Activated T-helper 1 cell treated with anti-CD3 and anti-CD28 coated beads, Interleukin-12 subunit alpha, Interleukin-12 subunit beta, Interleukin-2, Interleukin-4 antibody, amounts not matched to agents 30 ng/mL and 10 ng/mL and 1 ng/mL, durations not matched to agents 14 hours and 24 hours and 36 hours (primary cell): ENCODE measurements at regions of chr2 and their contacts with region 1.

Region 1: GRCh38 chr2:112121682-112122254 is 16.4 kb upstream of the FBLN7 start:
- DNase-seq: peak; percentile 30
- H3K4me3 Mint-ChIP-seq: no peak overlapping the region
- H3K27ac Mint-ChIP-seq: no peak overlapping the region
- H3K4me1 Mint-ChIP-seq: no peaks in the 10 kb centered on the region
- H3K27me3 Mint-ChIP-seq: no peaks in the 10 kb centered on the region

Region 2: GRCh38 chr2:112254466-112255239 is 132.9 kb after region 1 on chr2 and contains the start of gene ZC3H8:
- intact Hi-C with region 1: loop called (anchors 1 kb)
- DNase-seq: peak; percentile 96
- H3K4me3 Mint-ChIP-seq: peak within 1 kb of the TSS; percentile 50
- H3K27ac Mint-ChIP-seq: peak within 1 kb of the TSS; percentile 91
- H3K4me1 Mint-ChIP-seq: peaks cover 27% of the 10 kb centered on the region
- H3K27me3 Mint-ChIP-seq: no peaks in the 10 kb centered on the region
- total RNA-seq, gene ZC3H8: 32.9 and 37.4 TPM in 2 replicates

Region 3: DNA sequence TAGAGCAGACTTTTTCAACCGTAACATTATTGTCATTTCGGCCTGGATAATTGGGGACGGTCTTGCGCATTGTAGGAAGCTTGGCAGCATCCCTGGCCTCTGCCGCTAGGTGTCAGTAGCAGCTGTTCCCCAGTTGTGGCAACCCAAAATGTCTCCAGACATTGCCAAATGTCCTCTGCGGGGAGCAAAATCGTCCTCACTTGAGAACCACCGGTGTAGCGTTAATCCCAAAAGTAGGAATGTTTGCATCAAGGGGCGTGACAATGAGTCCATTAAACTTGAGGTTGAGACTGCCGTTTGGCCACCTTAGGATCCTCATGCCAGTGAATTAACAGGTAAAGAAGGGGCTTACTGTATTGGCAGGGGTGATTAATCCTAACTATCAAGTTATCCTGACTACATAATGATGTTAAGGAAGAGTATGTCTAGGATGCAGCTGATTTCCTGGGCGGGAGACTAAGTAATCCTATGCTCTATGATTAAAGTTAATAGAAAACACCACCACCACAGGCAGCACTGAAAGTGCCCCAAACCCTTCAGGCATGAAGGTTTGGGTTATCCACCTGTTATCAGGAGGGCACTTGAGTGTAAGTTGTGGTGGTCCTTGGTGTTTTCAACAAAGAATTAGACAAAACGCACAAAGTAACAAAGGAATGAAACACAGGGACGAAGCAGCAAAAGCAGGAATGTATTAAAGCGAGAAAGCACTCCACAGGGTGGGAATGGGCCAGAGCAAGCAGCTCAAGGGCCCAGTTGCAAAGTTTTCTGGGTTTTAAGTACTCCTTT is 137.9 kb after region 1 on chr2:
- intact Hi-C with region 1: loop called (anchors 1 kb)
- DNase-seq: peak; percentile 74
- H3K4me3 Mint-ChIP-seq: peak overlapping the region; percentile 43
- H3K27ac Mint-ChIP-seq: no peak overlapping the region
- H3K4me1 Mint-ChIP-seq: peaks cover 26% of the 10 kb centered on the region
- H3K27me3 Mint-ChIP-seq: peaks cover 8% of the 10 kb centered on the region

Region 4: GRCh38 chr2:112481050-112481527 is 359.3 kb after region 1 on chr2:
- intact Hi-C with region 1: loop called (anchors 5 kb)
- DNase-seq: peak; percentile 79
- H3K4me3 Mint-ChIP-seq: peak overlapping the region; percentile 87
- H3K27ac Mint-ChIP-seq: peak overlapping the region; percentile 96
- H3K4me1 Mint-ChIP-seq: peaks cover 40% of the 10 kb centered on the region
- H3K27me3 Mint-ChIP-seq: peaks cover 4% of the 10 kb centered on the region